IMR-90 (cell line): ENCODE measurements at regions of chr6 and their contacts with region 1.

Region 1: DNA sequence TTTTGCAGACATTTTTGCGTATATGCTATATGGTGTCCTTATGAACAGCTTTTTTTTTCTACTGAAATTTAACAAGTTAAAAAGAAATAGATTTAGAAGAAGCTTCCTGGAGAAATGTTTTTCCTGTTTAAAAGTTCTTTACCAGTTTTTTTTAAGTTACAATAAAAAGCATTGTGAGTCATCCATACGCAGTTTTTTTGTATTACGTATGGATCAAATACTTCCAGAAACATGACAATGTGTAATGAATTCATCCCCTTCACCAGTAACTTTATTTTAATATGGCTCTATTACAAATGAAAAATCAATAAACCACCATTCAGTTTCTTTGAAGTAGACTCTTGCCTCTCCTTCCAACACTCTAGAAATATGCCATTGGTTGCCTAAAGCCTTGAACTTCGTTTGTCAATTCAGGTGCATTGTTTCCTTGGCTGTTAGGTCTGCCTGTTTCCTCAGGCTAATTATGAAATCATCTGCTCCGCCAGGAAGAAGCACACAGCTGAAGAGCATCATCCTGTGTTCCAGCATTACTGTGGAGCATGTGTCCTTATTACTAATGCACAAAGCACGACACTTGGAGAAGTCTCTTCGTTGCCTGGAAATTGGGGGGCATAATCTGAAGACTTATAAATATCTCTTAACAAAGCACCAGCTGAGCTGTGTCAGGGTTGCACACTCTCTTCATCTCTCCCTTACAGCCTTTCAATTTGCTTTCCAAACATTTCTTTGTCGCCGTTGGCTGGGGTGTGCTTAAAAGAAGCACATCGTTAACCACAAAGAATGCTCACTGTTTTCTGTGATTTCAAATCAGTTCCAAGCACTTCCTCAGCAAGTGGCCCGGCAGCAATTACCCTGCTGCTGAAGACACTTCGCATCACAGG is 9.6 kb downstream of the MOXD1 start:
- DNase-seq: peak; percentile 96
- ATAC-seq: peak; percentile 93
- H3K4me3 ChIP-seq: no peak overlapping the region; the same call in 1 of the 2 replicates
- H3K27ac ChIP-seq: peak overlapping the region; percentile 93
- H3K4me1 ChIP-seq: peaks cover 14% of the 10 kb centered on the region
- H3K27me3 ChIP-seq: no peaks in the 10 kb centered on the region
- CTCF ChIP-seq: no peak
- POLR2A ChIP-seq: no peak
- RAD21 ChIP-seq: no peak

Region 2: GRCh38 chr6:132190097-132190814 is 201.4 kb before region 1 on chr6:
- CTCF ChIA-PET with region 1: no interaction called
- POLR2A ChIA-PET with region 1: no interaction called
- dilution Hi-C with region 1: no loop called
- in situ Hi-C with region 1: no loop called
- intact Hi-C with region 1: no loop called
- DNase-seq: peak; percentile 75
- ATAC-seq: peak; percentile 45; the same call in 1 of the 2 replicates
- H3K4me3 ChIP-seq: no peak overlapping the region
- H3K27ac ChIP-seq: peak overlapping the region; percentile 13; the same call in 1 of the 2 replicates
- H3K4me1 ChIP-seq: peaks cover 5% of the 10 kb centered on the region
- H3K27me3 ChIP-seq: no peaks in the 10 kb centered on the region
- CTCF ChIP-seq: no peak
- POLR2A ChIP-seq: no peak
- RAD21 ChIP-seq: no peak

Region 3: DNA sequence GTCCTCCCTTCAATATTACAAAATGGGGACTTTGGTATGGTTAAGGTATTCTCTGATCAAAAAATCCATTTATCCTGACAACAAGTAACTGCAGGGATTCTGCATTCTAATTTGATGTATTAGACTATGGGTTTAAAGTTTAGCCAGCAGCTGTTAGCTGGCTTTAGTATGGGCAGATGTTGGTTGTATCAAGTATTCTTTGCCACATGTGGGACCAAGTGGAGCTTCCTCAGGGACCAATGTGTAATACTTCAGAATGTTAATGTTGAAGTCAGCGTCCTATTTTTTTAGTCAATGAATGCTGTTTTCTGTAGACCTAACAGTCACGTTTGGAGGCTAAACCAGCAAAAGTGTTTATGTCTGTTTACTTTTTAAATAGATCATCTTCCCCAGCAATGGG is 31.7 kb before region 1 on chr6:
- CTCF ChIA-PET with region 1: no interaction called
- POLR2A ChIA-PET with region 1: no interaction called
- dilution Hi-C with region 1: no loop called
- in situ Hi-C with region 1: no loop called
- intact Hi-C with region 1: loop called (anchors 2 kb)
- DNase-seq: no peak
- ATAC-seq: no peak
- H3K4me3 ChIP-seq: no peak overlapping the region
- H3K27ac ChIP-seq: no peak overlapping the region
- H3K4me1 ChIP-seq: no peaks in the 10 kb centered on the region; the same call in 1 of the 2 replicates
- H3K27me3 ChIP-seq: no peaks in the 10 kb centered on the region
- CTCF ChIP-seq: no peak
- POLR2A ChIP-seq: no peak
- RAD21 ChIP-seq: no peak

Region 4: DNA sequence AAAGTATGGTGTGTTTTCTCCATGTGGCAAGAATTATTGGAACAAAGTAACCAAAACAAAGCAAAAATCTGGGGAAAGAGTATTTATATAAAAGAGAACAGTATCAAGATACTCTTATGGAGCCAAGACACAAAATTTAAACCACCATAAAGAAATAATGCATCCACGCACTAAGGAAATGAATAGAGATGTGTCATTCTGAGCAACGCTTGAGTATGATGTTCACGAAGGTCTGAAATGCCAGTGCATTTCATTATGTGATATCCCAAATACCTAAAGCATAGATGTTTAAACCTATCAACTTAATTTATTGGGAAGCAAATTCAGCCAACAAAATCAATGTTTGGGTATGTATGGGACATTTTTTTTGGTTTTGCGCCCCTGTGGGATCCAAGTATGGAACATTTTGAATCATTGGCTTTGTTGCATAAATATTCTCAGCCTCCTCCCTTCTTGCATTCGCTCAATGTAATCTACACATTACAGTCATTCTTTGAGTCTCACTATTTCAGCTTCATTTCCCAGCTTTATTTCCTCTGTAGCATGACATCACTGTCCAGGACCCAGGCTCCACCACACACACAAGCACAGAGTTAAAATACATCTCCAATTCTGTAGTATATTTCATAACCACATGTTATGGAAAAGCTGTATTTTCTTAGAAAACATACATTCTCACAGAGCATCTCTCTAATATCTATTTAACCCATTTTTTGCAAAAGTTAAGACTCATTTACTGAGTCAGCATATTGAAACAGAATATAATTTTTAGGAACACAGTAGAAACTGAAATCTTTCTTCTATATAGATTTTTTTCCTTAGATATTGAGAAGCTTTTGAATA is 21.2 kb after region 1 on chr6:
- CTCF ChIA-PET with region 1: no interaction called
- POLR2A ChIA-PET with region 1: no interaction called
- dilution Hi-C with region 1: no loop called
- in situ Hi-C with region 1: no loop called
- intact Hi-C with region 1: no loop called
- DNase-seq: peak; percentile 65
- ATAC-seq: peak; percentile 69; the same call in 1 of the 2 replicates
- H3K4me3 ChIP-seq: no peak overlapping the region
- H3K27ac ChIP-seq: no peak overlapping the region
- H3K4me1 ChIP-seq: no peaks in the 10 kb centered on the region
- H3K27me3 ChIP-seq: no peaks in the 10 kb centered on the region
- CTCF ChIP-seq: no peak
- POLR2A ChIP-seq: no peak
- RAD21 ChIP-seq: no peak

Region 5: DNA sequence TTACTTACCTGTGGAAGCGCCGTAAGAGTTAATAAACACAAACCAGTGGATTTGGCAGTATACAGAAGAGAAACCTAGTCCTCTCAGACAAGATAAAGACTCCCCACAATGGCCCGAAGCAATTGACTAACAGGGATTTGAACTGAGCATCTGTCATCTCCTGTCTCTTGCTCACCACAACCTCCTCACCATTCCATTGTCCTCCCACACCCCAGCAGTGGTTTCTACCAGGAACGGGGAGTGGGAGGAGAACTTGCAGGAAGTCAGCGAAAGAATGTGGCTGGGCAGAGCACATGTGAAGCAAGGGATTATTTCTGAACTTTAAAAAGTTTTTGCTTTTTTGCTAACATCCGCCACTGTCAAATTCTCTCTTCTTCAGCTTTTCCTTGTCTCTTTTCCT is 291.9 kb after region 1 on chr6:
- CTCF ChIA-PET with region 1: no interaction called
- POLR2A ChIA-PET with region 1: no interaction called
- dilution Hi-C with region 1: no loop called
- in situ Hi-C with region 1: no loop called
- intact Hi-C with region 1: no loop called
- DNase-seq: peak; percentile 74
- ATAC-seq: 0 out of 2 replicates have a peak, but pooled peaks have one; percentile 13
- H3K4me3 ChIP-seq: no peak overlapping the region
- H3K27ac ChIP-seq: no peak overlapping the region
- H3K4me1 ChIP-seq: peaks cover 2% of the 10 kb centered on the region
- H3K27me3 ChIP-seq: no peaks in the 10 kb centered on the region; the same call in 1 of the 2 replicates
- CTCF ChIP-seq: no peak
- POLR2A ChIP-seq: no peak
- RAD21 ChIP-seq: no peak

Region 6: GRCh38 chr6:132713352-132714134 is 321.9 kb after region 1 on chr6 and contains the start of gene VNN1:
- CTCF ChIA-PET with region 1: no interaction called
- POLR2A ChIA-PET with region 1: no interaction called
- dilution Hi-C with region 1: no loop called
- in situ Hi-C with region 1: no loop called
- intact Hi-C with region 1: no loop called
- DNase-seq: no peak
- ATAC-seq: no peak
- H3K4me3 ChIP-seq: no peak within 1 kb of the TSS
- H3K27ac ChIP-seq: no peak within 1 kb of the TSS
- H3K4me1 ChIP-seq: 0 out of 2 replicates have a peak, but pooled peaks cover 4% of the 10 kb centered on the region
- H3K27me3 ChIP-seq: no peaks in the 10 kb centered on the region
- CTCF ChIP-seq: no peak
- POLR2A ChIP-seq: no peak
- RAD21 ChIP-seq: no peak
- total RNA-seq, gene VNN1: not detected in 2 replicates